ENCODE measurements at regions of chr19 and their contacts with region 1.

Region 1: DNA sequence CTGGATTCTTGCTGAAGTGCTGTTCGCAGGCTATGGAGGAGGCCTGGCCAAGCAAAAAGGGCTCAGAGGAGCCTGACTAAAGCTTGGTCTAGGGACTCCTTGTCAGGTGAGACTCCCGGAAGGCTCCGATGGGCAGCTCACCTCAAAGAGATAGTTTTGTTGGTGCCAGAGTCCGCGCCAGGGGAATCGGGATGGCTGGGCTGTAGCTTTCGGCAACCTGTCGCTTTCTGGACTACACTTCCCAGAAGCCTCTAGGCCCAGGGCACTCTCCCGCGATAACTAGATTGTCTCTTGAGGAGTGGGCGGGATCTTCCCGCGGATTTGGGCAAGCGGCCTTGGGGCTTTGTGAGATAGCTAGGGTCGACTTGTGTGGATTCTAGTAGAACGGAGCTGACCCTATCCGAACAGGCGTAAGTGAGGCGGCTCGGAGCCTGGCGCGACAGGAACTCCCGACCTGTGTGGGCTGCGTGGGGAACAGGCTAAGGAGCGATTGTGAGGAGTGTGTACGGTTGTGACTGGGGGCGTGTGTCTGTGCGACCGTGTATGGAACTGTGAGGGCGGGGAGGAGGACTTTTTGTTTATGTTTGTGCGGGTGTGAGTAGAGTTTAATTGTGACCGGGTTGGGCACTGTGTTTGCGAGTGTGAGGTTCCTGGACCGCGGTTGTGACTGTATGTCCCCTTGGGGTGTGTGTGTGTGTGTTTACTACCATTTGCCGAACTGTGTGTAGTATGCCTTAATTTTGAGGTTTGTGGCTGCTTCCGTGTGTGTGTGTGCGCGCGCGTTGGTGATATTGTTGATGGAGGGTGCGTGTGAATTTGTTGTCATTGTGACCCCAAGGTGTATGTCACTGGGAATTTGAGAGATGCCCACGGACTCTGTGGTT is at the start of gene ZNF345:
- DNase-seq: peak; percentile 93
- ATAC-seq: peak; percentile 82
- H3K4me3 ChIP-seq: peak within 1 kb of the TSS; percentile 92 to 100 (median 93)
- H3K4me3 Mint-ChIP-seq: no peak within 1 kb of the TSS
- H3K27ac ChIP-seq: peak within 1 kb of the TSS; percentile 74 to 84
- H3K27ac Mint-ChIP-seq: no peak within 1 kb of the TSS
- H3K4me1 ChIP-seq: peaks cover 16 to 20% of the 10 kb centered on the region in 2 donors
- H3K4me1 Mint-ChIP-seq: peaks cover 5% of the 10 kb centered on the region
- H3K27me3 ChIP-seq: no peaks in the 10 kb centered on the region
- H3K27me3 Mint-ChIP-seq: no peaks in the 10 kb centered on the region
- CTCF ChIP-seq: no peak
- total RNA-seq, gene ZNF345: 17.7 and 19.5 TPM in 2 replicates

Region 2: GRCh38 chr19:35929876-35930275 is 920.9 kb before region 1 on chr19:
- CTCF ChIA-PET with region 1: no interaction called
- POLR2A ChIA-PET with region 1: no interaction called
- intact Hi-C with region 1: no loop called
- DNase-seq: peak; percentile 52
- ATAC-seq: no peak
- H3K4me3 ChIP-seq: peak overlapping the region in 1 of 5 experiments; percentile 51
- H3K4me3 Mint-ChIP-seq: peak overlapping the region; percentile 66
- H3K27ac ChIP-seq: peak overlapping the region; percentile 81 to 86
- H3K27ac Mint-ChIP-seq: peak overlapping the region; percentile 96
- H3K4me1 ChIP-seq: peaks cover 34 to 48% of the 10 kb centered on the region in 2 donors
- H3K4me1 Mint-ChIP-seq: peaks cover 41% of the 10 kb centered on the region
- H3K27me3 ChIP-seq: peaks cover 0 to 3% (median 0%) of the 10 kb centered on the region in 4 experiments
- H3K27me3 Mint-ChIP-seq: no peaks in the 10 kb centered on the region
- CTCF ChIP-seq: no peak

Region 3: DNA sequence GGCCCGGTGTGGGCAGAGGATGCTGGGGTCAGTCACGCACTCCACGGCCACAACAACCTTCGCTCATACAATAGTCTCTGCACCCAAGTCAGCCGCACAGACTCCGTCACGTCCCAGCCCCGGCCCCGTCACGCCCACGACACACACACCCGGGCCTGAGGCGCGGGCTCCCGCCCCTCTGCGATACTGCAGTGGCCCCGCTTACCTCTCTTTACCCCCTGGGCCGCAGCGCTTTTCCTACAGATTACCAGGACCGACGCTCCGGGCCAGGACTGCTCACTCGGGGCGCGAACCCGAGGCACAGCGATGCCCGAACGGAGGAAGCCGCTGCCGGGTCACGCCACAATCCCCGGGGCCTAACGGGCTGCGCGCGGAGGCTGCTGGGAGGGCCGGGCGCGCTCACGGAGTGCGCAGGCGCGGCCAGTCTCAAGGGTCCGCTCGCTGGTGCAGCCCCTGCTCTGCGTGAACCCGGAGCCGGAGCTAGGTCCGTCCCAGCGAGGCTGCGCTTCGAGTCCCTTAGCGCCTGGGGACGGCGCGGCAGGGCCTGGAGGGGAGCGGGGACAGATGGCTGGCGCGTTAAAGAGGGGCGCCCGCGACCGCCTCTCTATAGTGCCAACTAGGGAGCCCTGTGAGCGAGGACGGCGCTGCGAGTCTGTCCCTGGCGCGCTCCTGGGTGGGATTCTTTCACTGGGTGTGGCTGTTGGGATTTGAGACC is 432.4 kb before region 1 on chr19 and contains the start of gene ZFP82:
- CTCF ChIA-PET with region 1: no interaction called
- POLR2A ChIA-PET with region 1: no interaction called
- intact Hi-C with region 1: loop called (anchors 2 kb)
- DNase-seq: peak; percentile 91
- ATAC-seq: peak; percentile 96
- H3K4me3 ChIP-seq: peak within 1 kb of the TSS; percentile 27 to 98 (median 85)
- H3K4me3 Mint-ChIP-seq: peak within 1 kb of the TSS; percentile 97
- H3K27ac ChIP-seq: peak within 1 kb of the TSS; percentile 90 to 95
- H3K27ac Mint-ChIP-seq: peak within 1 kb of the TSS; percentile 96
- H3K4me1 ChIP-seq: peaks cover 17 to 23% of the 10 kb centered on the region in 2 donors
- H3K4me1 Mint-ChIP-seq: peaks cover 33% of the 10 kb centered on the region
- H3K27me3 ChIP-seq: peaks cover 0 to 21% (median 13%) of the 10 kb centered on the region in 4 experiments
- H3K27me3 Mint-ChIP-seq: peaks cover 17% of the 10 kb centered on the region
- CTCF ChIP-seq: no peak
- total RNA-seq, gene ZFP82: 14.4 and 14.6 TPM in 2 replicates

Region 4: DNA sequence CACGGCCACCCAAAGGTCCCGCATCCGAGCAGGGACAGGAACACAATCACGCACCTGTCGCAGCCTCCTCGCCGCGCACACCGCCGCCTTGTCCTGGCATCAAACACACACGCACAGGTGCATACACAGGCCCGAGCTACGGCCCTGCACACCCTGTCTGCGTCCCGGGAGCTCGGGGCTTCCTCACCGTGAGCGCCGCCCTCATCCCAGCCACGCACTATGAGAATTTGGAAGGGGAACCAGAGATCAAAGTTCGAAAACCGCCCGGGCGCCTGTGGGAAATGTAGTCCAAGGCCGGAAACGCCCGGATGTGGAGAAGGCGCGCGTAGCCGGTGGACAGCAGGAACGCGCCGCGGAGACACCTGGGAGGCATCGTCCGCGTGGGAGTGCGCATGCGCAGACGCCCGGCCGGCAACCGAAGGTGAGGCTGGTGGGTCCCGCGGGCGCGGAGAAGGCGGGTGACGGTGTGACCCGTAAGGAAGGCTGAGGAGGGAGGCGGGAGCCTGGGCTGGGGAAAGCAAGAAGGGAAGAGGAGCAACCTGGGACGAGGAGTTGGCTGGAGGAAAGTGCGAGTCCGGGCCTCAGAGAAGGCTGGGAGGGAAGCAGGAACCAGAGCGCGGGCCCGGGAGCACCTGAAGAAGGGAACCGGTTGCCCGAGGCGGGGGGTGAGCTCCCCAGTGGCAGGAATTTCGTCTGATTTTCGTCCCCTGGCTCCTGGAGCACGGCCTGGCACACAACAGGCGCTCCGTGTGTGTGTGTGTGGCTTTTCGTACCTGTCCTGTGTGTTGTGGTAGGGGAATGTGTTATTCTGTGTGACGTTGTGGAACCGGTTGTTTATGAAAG is 163.4 kb before region 1 on chr19 and contains the start of gene ZNF567:
- CTCF ChIA-PET with region 1: no interaction called
- POLR2A ChIA-PET with region 1: no interaction called
- intact Hi-C with region 1: loop called (anchors 1 kb)
- DNase-seq: peak; percentile 96
- ATAC-seq: peak; percentile 94
- H3K4me3 ChIP-seq: peak within 1 kb of the TSS; percentile 48 to 90 (median 76)
- H3K4me3 Mint-ChIP-seq: peak within 1 kb of the TSS; percentile 100
- H3K27ac ChIP-seq: peak within 1 kb of the TSS; percentile 56 to 72
- H3K27ac Mint-ChIP-seq: peak within 1 kb of the TSS; percentile 96
- H3K4me1 ChIP-seq: peaks cover 14 to 19% of the 10 kb centered on the region in 2 donors
- H3K4me1 Mint-ChIP-seq: peaks cover 28% of the 10 kb centered on the region
- H3K27me3 ChIP-seq: no peaks in the 10 kb centered on the region
- H3K27me3 Mint-ChIP-seq: no peaks in the 10 kb centered on the region
- CTCF ChIP-seq: no peak
- total RNA-seq, gene ZNF567: 19.7 and 22.4 TPM in 2 replicates

Region 5: DNA sequence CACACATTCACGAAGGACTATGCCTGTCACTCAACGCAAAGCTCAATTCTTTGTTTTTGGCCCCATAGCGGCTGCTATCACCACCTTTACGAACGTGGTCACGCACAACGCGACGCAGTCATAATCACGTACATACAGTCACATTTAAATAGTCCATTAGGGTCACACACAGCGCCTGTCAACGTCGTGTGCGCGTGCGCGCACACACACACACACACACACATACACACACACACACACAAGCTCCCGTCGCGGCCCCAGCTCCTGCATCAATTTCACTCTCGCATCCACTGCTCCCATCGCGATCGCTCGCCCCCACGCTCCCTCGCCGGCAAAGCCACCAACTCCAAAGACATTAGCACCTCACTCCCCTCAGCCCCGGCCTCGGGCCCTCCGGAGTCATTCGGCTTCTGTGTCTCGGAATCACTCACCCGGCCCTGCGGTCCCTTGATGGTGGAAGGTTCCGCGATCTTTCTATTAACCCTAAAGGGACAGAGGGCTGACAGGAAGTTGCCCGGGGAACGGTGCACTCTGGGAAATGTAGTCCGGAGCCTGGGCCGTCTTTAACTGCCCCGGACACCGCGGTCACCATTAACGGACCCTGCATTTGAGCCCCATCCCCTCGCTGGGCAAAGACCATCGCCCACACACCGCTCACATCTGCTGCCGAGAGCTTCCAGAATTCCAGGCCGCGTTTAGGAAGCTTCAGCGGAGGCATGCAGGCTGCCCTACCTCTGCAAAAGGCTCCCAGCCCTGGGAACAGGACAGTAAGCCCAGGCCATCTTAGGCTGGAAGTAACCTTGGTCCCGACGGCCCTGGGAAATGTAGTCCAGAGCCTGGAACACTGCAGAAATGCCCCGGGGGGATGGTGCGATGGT is 12.7 kb before region 1 on chr19 and contains the start of gene ZNF790:
- CTCF ChIA-PET with region 1: interaction called, 23 read pairs
- POLR2A ChIA-PET with region 1: interaction called, 41 read pairs
- intact Hi-C with region 1: loop called (anchors 1 kb)
- DNase-seq: peak; percentile 94
- ATAC-seq: peak; percentile 90
- H3K4me3 ChIP-seq: peak within 1 kb of the TSS; percentile 79 to 90 (median 83)
- H3K4me3 Mint-ChIP-seq: no peak within 1 kb of the TSS
- H3K27ac ChIP-seq: peak within 1 kb of the TSS; percentile 84 to 89
- H3K27ac Mint-ChIP-seq: no peak within 1 kb of the TSS
- H3K4me1 ChIP-seq: peaks cover 10 to 18% of the 10 kb centered on the region in 2 donors
- H3K4me1 Mint-ChIP-seq: no peaks in the 10 kb centered on the region
- H3K27me3 ChIP-seq: no peaks in the 10 kb centered on the region
- H3K27me3 Mint-ChIP-seq: no peaks in the 10 kb centered on the region
- CTCF ChIP-seq: no peak
- total RNA-seq, gene ZNF790: 14.8 and 15.1 TPM in 2 replicates

Region 6: DNA sequence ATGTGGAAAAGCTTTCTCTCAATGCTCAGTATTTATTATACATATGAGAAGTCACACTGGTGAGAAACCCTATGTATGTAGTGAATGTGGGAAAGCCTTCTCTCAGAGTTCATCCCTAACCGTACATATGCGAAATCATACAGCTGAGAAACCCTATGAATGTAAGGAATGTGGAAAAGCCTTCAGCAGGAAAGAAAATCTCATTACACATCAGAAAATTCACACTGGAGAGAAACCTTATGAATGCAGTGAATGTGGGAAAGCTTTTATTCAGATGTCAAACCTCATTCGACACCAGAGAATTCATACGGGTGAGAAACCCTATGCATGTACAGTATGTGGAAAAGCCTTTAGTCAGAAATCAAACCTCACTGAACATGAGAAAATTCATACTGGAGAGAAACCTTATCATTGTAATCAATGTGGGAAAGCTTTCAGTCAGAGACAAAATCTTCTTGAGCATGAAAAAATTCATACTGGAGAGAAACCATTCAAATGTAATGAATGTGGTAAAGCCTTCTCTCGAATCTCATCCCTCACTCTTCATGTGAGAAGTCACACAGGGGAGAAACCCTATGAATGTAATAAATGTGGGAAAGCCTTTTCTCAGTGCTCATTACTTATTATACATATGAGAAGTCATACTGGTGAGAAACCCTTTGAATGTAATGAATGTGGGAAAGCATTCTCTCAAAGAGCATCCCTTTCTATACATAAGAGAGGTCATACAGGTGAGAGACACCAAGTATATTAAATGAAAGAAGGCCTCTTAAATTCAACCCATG is 99.7 kb after region 1 on chr19:
- CTCF ChIA-PET with region 1: no interaction called
- POLR2A ChIA-PET with region 1: no interaction called
- intact Hi-C with region 1: no loop called
- DNase-seq: no peak
- ATAC-seq: no peak
- H3K4me3 ChIP-seq: no peak overlapping the region
- H3K4me3 Mint-ChIP-seq: no peak overlapping the region
- H3K27ac ChIP-seq: no peak overlapping the region
- H3K27ac Mint-ChIP-seq: no peak overlapping the region
- H3K4me1 ChIP-seq: no peaks in the 10 kb centered on the region
- H3K4me1 Mint-ChIP-seq: no peaks in the 10 kb centered on the region
- H3K27me3 ChIP-seq: no peaks in the 10 kb centered on the region
- H3K27me3 Mint-ChIP-seq: no peaks in the 10 kb centered on the region
- CTCF ChIP-seq: no peak

Region 7: DNA sequence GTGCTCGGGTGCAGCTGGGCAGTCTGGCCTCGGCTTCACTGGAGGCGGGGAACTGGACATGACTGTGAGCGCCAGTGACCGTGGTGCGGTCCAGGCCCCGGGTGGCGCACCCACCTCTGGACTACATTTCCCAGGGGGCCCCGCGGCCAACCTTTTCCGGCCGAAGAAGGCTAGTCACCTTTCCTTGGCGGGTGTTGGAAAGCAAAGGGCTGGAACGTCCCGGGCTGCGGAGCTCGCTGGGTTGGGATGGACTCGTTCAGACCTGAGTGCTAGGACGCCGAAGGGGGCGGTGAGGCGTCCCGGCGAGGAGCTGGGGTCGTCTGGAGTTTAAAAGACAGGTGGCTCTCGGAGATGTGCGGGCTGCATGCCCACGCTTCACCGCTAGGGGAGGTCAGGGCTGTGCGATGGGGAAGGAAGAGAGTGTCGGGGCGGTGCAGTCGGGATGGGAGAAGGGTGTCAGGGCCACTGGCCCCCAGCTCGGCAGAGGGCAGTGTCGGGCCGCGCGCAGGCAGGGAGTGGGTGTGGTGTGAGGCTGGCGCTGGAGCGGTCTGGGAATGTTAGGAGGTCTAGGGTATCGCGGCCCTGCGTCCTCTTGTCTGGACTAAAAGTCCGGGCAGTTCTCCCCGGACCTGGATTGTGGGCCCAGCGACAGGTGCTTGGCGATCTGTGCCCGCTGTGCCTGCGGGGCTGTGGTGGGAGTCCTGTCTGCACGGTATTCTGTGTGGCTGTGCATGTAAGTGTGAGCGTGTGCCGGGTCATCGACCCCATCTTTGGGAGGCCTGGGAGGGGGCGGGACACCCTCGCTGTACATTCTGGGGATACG is 122.4 kb after region 1 on chr19:
- CTCF ChIA-PET with region 1: interaction called, 4 read pairs
- POLR2A ChIA-PET with region 1: no interaction called
- intact Hi-C with region 1: loop called (anchors 1 kb)
- DNase-seq: peak; percentile 92
- ATAC-seq: peak; percentile 97
- H3K4me3 ChIP-seq: peak overlapping the region; percentile 52 to 92 (median 79)
- H3K4me3 Mint-ChIP-seq: peak overlapping the region; percentile 97
- H3K27ac ChIP-seq: peak overlapping the region; percentile 49 to 71
- H3K27ac Mint-ChIP-seq: peak overlapping the region; percentile 91
- H3K4me1 ChIP-seq: peaks cover 11 to 16% of the 10 kb centered on the region in 2 donors
- H3K4me1 Mint-ChIP-seq: peaks cover 13% of the 10 kb centered on the region
- H3K27me3 ChIP-seq: no peaks in the 10 kb centered on the region
- H3K27me3 Mint-ChIP-seq: no peaks in the 10 kb centered on the region
- CTCF ChIP-seq: peak; percentile 78

Region 8: GRCh38 chr19:37594304-37594981 is 743.6 kb after region 1 on chr19 and contains the starts of genes ZNF540 and ZNF571:
- CTCF ChIA-PET with region 1: no interaction called
- POLR2A ChIA-PET with region 1: no interaction called
- intact Hi-C with region 1: loop called (anchors 2 kb)
- DNase-seq: peak; percentile 95
- ATAC-seq: peak; percentile 96
- H3K4me3 ChIP-seq: peak within 1 kb of the TSS; percentile 67 to 88 (median 87)
- H3K4me3 Mint-ChIP-seq: peak within 1 kb of the TSS; percentile 99
- H3K27ac ChIP-seq: peak within 1 kb of the TSS; percentile 93 to 96
- H3K27ac Mint-ChIP-seq: peak within 1 kb of the TSS; percentile 99
- H3K4me1 ChIP-seq: peaks cover 11 to 14% of the 10 kb centered on the region in 2 donors
- H3K4me1 Mint-ChIP-seq: peaks cover 25% of the 10 kb centered on the region
- H3K27me3 ChIP-seq: no peaks in the 10 kb centered on the region
- H3K27me3 Mint-ChIP-seq: no peaks in the 10 kb centered on the region
- CTCF ChIP-seq: no peak
- total RNA-seq, gene ZNF540: 10.7 and 10.8 TPM in 2 replicates
- total RNA-seq, gene ZNF571: 10.0 and 13.1 TPM in 2 replicates